Posterior cingulate gyrus (tissue), 11 donors: ENCODE measurements at regions of chr3 and their contacts with region 1.

Region 1: DNA sequence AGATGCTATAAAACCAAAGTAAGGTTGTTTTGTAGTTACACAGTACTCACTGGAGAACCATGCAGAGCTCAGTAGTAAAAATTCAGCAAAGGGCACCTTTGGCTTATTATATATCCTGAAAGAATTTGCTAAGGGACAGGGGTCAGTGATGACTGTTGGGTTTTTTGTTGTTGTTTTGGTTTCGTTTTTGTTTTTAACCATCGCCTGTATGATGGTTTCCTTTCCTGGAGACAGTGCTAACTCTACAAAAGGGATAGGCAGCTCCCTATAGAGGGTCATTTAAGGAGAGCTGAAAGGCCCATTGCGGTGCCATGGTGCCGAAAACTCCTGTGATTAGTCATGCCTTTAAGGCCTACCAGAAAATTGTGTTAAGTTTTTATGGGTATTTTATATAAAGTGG is 118.2 kb upstream of the GOLIM4 start:
- DNase-seq: no peak

Region 2: DNA sequence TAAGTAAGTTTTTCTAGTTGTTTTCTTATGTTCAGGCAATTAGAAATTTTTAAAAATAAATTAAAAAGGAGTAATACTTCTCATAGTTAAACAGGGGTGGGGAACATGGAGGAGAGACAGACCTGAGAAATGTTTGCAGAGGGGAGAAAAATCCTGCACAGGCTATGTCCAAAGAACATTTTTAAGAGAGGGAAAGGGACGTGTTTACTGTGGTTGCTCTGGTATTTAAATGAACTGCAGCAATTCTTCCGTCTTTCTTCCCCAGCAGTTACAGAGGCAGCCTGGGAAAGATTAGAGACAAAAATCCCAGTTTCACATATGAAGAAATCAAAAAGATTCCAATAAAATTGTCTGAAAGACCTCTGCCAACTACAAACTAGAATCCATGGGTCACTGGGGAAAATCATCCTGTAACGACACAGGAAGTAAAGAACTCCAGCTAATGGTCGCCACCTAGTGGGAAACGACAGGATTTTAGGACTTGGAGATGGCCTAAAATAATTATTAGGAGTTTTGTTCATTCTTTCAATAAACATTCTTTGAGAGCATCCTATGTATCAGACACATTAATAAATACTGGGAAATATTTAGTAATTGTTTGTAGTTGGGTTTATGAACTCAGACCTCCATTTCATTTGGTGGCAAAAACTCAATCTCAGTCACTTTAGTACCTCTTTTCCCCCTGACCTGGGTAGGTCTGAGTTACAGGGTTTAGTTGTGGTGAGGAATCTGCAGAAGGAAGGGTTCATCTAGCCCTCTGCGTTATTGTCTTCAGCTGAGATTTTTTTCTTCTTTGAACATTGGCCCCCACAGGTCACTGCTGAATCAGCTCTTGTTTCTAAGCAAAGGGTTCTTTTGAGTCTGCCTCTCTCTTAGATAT is 48.3 kb before region 1 on chr3:
- intact Hi-C with region 1: no loop called
- DNase-seq: peak in 6 of 10 donors; percentile 23 to 67 (median 54)

Region 3: GRCh38 chr3:168467115-168467714 is 253.3 kb after region 1 on chr3:
- intact Hi-C with region 1: loop called (anchors 2 kb)
- DNase-seq: peak in 2 of 10 donors; percentile 4 to 18

Region 4: GRCh38 chr3:168620826-168621225 is 406.9 kb after region 1 on chr3:
- intact Hi-C with region 1: loop called (anchors 5 kb)
- DNase-seq: peak in 7 of 10 donors; percentile 17 to 88 (median 49)

Region 5: GRCh38 chr3:168847291-168847883 is 633.5 kb after region 1 on chr3:
- intact Hi-C with region 1: loop called (anchors 1 kb)
- DNase-seq: peak in 2 of 10 donors; percentile 8 to 10